ENCODE measurements at regions of chr20 and their contacts with region 1.

Region 1: DNA sequence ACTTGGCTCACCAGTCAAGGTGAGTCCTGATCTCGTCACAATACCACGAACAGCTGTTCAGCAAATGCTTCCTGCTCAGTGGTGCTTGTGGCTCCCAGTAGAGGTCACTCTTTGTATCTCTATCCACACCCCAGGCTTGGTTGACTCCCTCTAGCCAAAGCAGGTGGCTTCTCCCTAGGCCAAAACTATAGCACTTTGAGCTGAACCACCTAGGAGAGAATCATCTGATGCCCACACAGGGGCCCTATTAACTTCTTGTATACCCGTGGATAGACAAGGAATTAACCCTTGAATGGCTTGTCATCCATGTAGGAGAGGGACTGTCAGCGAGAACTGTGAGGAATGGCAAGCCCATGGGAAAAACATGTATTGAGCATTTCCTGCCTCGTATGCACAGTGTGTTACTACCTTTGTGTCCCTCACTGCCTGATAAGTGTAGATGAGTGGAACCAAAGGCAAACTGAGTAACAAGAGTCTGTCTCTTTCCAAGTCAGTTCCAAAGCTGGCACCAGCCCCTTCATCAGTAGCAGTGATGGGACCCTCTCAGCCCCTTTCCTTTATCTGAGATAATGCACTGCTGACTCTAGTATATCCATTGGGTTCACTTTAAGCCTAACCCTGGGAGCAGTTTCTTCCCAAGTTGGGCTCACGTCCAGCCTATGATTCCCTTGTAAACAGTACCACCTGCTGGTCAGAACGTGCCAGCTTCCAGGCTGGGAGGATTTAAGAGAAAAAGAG is 42.5 kb downstream of the EIF2S2 start:
- DNase-seq: peak; percentile 49
- CTCF ChIP-seq: peak; percentile 74

Region 2: DNA sequence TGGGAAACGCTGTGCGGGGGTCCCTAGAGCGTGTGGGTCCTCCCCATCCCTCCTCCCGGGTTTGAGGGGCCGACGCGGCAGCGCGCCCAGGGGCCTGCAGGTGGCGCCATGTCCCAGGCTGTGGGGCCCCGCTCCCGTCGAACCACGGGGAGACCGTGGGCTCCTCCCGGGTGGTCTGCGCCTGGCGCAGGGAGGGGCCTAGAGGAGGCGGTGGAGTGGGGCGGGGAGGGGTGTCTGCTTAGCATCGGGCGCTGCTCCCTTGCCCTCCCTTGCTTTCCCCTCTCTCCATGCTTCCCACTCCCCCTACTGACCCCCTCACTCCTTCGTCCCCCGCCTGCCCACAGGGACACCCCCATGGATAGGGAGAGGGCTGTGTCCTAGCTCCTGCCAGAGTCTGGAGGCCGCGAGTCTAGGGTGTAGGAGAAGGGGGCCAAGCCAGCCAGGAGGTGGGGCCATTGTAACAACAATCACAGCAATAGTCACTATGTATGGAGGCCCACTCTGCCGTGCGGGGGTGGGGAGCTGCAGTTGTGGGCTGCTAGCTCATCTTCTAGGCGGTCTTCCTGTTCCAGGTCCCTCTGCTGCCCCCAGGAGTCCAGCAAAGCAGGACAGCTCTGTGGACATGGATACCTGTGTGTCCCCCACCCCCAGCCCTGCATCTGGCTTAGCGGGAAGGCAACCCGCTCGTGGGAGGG is 206.7 kb before region 1 on chr20:
- CTCF ChIA-PET with region 1: interaction called, 25 read pairs
- POLR2A ChIA-PET with region 1: no interaction called
- DNase-seq: peak; percentile 83
- CTCF ChIP-seq: peak; percentile 87

Region 3: DNA sequence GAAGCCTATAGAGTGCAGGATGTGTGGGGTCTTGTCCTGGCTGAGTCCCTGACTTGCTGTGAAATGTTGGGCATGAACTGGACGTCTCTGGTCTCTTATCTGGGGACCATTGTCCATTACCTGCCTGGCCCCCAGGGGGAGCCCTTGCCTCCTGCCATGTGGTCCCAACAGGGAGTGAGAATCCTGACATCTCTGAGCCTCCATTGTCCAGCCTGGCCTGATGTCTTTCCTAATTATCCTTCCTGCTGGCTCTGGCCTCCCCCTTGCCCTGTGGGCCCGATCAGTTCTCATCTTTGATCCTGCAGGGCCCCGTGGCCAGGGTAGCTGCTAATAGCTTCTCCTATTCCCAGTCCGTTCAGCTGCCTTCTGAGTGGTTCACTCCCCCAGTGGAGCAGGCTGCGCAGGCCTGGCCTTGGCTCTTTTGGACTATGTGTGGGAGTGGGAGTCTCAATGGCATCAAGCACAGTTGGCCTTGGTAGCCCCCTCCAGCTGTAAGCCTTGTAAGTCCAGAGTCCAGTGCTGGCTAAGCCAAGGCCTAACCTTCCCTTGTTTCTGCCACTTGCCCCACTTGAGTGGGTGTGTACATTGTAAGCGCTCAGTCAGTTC is 153.7 kb before region 1 on chr20:
- CTCF ChIA-PET with region 1: interaction called, 35 read pairs
- POLR2A ChIA-PET with region 1: no interaction called
- DNase-seq: peak; percentile 73
- CTCF ChIP-seq: peak; percentile 66

Region 4: DNA sequence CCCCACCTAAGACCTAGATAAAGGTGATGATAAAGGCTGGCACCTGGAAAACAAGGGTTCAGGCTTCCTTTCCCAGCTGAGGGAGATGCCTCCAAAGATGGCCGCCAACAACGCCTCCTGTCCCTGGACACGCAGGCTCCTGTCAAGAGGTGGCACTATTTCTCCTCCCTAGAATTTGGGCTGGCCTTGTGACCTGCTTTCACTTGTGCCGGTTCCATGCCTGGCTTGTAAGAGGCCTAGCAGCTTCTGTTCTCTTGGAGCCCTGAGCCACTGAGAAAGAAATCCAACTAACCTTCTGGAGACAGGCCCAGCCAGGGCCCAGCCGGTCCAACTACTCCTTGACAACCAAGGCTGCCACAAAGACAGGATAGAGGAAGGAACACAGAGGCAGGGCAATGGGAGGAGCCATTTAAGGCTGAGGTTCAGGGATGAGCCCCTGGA is 136.0 kb before region 1 on chr20:
- CTCF ChIA-PET with region 1: interaction called, 11 read pairs
- POLR2A ChIA-PET with region 1: no interaction called
- DNase-seq: peak; percentile 71
- CTCF ChIP-seq: peak; percentile 58

Region 5: DNA sequence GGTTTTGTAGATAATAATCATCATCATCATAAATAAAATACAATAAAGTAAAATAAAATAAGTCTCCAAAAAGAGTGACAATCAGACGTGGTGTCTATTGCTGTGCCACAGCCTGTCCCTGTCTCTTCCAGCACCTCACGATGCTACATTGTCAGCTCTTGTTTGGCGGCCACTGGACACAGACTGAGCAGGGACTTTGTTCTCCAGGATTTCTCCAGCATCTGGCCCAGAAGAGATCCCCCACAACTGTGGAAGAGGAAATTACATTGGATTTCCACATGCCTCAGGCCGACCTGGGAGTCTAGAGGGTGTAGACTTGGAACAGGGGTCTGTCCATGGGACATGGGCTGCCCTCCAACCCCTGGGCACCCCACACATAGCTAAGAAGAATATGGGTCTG is 115.0 kb before region 1 on chr20:
- CTCF ChIA-PET with region 1: no interaction called
- POLR2A ChIA-PET with region 1: no interaction called
- DNase-seq: no peak
- CTCF ChIP-seq: no peak

Region 6: GRCh38 chr20:34049897-34050695 is 19.4 kb before region 1 on chr20:
- CTCF ChIA-PET with region 1: interaction called, 24 read pairs
- POLR2A ChIA-PET with region 1: no interaction called
- DNase-seq: no peak
- CTCF ChIP-seq: no peak

Region 7: GRCh38 chr20:34058831-34059230 is 10.7 kb before region 1 on chr20:
- CTCF ChIA-PET with region 1: interaction called, 13 read pairs
- POLR2A ChIA-PET with region 1: no interaction called
- DNase-seq: no peak
- CTCF ChIP-seq: no peak

Region 8: DNA sequence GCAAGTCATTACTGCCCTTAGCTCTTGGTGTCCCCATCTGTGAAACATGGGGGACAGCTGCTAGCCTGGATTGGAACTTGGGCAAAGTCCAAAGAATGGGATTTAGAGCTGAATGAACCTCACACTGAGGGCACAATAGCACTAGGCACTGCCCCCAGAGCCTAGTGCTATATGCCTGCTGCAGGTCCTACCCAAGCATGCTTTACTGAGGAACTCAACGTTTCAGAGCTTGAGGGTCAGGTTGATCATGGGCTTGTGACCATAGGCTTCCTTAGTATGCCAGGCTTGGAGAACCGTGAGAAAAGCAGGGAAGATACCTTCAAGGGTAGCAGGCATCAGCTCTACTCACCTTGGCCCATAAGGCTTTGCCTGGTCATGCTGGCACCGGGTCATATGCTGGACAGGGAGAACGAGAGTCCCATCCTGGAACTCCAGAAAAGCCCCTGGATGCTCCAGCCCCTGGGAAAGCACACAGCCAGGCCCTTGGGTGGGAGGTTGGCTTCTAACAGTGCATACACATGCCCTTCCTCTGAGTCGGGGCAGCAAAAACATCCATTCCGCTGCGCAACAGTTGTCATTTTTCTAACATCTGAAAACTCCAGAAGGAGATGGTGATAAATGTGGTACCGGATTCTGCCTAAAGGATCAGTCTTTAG is 12.8 kb after region 1 on chr20:
- CTCF ChIA-PET with region 1: interaction called, 23 read pairs
- POLR2A ChIA-PET with region 1: no interaction called
- DNase-seq: no peak
- CTCF ChIP-seq: no peak